Right ventricle myocardium inferior (tissue), 1 donor: ENCODE measurements at regions of chr6 and their contacts with region 1.

Region 1: GRCh38 chr6:33014841-33015634 is 5.6 kb upstream of the HLA-DOA start:
- DNase-seq: no peak
- ATAC-seq: peak; percentile 58

Region 2: DNA sequence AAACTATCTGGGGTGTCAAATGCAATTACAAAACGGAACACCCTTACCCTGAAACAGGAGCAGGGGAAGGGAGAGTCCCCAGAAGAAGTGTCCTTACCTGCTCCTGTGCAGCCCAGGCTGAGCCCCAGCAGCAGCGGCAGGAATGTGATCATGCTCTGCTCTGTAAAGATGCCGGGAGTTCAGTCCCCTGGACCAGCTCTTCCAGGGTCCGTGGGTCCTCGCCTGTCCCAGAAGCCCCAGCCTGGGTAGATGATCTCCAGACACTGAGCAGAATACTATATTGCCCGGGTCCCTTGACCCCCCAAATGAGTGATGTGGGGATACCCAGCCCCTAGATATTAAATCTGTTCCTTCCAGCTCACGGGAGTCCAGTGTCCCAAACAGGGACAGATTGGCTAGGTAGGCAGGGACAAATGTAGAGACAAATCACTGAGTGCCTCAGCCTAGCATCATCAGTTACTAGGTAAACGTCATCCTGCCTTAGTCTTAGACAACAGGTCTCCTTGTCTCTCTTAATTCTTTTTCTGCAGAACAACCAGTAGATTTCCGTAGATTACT is 74.3 kb before region 1 on chr6 and contains the start of gene HLA-DMB:
- intact Hi-C with region 1: no loop called
- DNase-seq: no peak
- ATAC-seq: peak; percentile 92
- total RNA-seq, gene HLA-DMB: 8.8 TPM

Region 3: GRCh38 chr6:33077908-33078307 is 62.9 kb after region 1 on chr6:
- intact Hi-C with region 1: loop called (anchors 2 kb)
- DNase-seq: no peak
- ATAC-seq: no peak

Region 4: GRCh38 chr6:33147807-33148666 is 133.0 kb after region 1 on chr6:
- intact Hi-C with region 1: loop called (anchors 10 kb)
- DNase-seq: no peak
- ATAC-seq: no peak